Right ventricle myocardium superior (tissue), 1 donor: ENCODE measurements at regions of chr15 and their contacts with region 1.

Region 1: DNA sequence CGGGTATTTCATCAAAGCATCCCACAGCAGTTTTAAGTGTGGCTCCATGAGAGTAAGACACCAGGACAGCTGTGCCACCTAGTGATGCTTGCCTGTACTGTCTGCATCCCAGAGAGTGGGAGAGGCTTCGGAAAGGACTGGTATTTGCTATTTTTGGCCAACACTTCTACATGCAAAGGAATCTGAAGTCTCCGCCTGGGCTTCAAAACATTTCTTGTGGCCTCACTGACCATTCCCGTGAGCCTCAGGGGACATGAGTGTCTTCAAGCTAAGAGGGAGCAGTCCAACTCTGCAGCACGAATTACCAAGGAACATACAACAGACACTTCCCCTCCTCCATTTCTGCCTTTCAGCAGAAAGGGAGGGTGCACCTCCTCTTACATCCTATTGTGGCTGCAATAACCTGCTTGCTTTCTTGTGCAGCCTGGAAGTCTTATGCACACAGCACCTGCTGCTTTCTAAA is 177.5 kb downstream of the RORA start:
- DNase-seq: peak; percentile 49
- ATAC-seq: peak; percentile 95

Region 2: DNA sequence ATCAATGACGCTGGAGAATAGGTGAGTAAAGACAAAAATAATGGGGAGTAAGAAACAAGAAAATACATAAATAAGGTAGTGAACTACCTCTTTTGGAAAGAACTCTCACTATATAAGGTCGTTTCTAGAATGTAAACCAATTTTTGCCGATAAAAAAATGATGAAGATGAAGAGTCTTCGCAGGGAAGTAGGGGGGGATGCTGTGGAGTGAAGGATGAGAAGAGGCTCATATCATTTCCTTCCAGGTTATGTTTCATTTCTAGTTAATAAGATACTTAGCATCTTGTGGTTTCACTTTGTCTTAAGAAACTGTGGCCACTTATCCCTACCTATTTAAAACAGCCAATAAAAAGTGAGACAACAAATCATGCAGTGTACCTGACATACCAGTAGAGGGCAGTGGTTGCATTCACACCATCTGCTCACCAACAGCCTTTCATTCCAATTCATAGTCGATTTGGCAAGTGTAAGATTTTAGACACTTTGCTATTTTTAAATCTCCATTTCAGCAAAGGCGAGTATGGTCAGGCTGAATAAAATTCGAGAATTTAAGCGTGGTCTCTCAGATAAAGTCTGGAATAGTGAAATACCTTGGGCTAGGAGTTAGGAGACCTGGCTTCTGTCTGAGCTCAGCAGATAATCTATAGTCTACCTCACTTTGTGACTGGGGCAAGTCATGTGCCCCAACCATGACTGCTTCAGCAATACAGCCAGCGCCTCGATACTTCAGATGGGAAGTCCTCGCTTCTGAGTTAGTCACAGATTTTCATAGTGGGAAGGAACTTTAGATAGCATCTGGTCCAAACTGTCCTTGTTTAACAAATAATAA is 543.8 kb before region 1 on chr15:
- intact Hi-C with region 1: loop called (anchors 10 kb)
- DNase-seq: no peak
- ATAC-seq: peak; percentile 87

Region 3: GRCh38 chr15:60585743-60586708 is 465.6 kb before region 1 on chr15:
- intact Hi-C with region 1: loop called (anchors 5 kb)
- DNase-seq: no peak
- ATAC-seq: peak; percentile 81

Region 4: GRCh38 chr15:60916679-60917460 is 134.7 kb before region 1 on chr15:
- intact Hi-C with region 1: loop called (anchors 10 kb)
- DNase-seq: peak; percentile 92
- ATAC-seq: peak; percentile 93